Activated CD4-positive, alpha-beta T cell treated with anti-CD3 and anti-CD28 coated beads, Interleukin-2, amount 10 ng/mL, durations not matched to agents 24 days and 14 days (primary cell): ENCODE measurements at regions of chr1 and their contacts with region 1.

Region 1: DNA sequence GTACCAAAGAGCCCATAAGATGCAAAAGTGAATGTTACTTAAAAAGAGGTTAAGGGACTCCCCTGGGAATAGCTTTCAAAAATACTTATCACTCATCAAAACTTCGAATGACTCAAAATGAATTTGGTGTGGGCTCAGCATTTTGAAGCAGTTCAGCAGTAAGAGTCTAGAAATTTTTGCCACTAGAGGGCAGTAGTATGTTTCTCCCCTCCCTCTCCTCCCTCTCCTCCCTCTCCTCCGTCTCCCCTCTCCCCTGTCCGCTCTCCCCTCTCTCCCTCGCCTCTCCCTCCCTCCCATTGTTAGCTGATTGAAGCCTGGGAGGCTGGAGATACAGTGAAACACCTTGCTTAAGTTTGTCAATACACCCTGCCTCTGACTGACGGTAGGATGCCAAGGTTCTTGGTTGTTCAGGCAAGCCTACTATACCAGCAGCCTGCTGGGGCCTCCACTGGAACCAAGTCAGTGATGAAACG is 70.8 kb upstream of the TENT5C start:
- DNase-seq: peak; percentile 81
- H3K4me3 Mint-ChIP-seq: no peak overlapping the region
- H3K27ac Mint-ChIP-seq: peak overlapping the region; percentile 41
- H3K4me1 Mint-ChIP-seq: peaks cover 13% of the 10 kb centered on the region
- H3K27me3 Mint-ChIP-seq: no peaks in the 10 kb centered on the region

Region 2: DNA sequence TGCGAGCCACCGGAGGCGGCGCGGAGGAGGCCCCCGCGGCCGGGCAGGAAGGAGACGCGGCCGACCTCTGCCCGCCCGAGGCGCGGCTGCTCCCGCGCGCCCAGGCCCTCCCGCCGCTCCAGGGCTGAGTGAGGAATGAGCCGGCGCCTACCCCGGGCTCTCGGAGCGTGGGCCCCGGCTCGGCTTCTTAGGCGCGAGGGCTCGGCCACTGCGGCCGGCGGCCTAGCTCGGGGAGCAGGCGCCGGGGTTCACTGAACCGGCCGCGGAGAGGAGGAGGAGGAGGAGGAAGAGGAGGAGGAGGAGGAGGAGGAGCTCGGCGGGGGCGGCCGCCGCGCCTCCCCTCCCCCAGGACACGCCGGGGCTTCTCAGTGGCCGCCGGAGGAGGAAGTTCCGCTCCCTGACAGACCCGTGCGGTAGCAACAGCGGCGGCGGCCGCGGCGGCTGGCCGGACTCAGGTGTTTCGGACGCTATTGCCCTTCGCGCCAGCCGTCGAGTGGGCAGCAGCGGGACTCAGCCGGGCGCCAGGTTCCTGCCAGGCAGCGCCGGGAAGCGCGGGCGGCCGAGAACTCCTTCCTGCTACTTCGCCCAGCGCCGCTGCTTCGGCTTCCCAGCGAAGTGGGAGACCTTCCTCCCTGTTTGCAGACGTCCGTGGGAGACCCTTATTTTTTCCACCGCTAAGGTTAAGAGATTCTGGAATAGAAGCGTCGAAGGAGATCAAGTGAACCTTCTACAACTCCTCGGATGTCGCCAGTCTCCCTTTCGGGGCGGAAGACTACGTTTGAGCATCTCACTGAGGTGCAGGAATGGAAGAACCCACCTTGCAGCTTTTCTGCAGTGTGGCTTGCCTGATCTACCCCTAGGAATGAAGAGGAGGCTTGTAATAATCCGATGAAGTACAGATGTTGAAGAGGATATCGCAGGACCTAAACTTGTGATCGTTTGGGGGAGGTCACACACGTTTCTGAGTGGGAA is 167.7 kb before region 1 on chr1 and contains the start of gene MAN1A2:
- intact Hi-C with region 1: loop called (anchors 5 kb)
- DNase-seq: peak; percentile 95
- H3K4me3 Mint-ChIP-seq: peak within 1 kb of the TSS; percentile 93
- H3K27ac Mint-ChIP-seq: peak within 1 kb of the TSS; percentile 93
- H3K4me1 Mint-ChIP-seq: peaks cover 41% of the 10 kb centered on the region
- H3K27me3 Mint-ChIP-seq: no peaks in the 10 kb centered on the region
- total RNA-seq, gene MAN1A2: 23.9 and 28.7 TPM in 2 replicates

Region 3: GRCh38 chr1:117466761-117467160 is 68.3 kb before region 1 on chr1:
- intact Hi-C with region 1: no loop called
- DNase-seq: no peak
- H3K4me3 Mint-ChIP-seq: no peak overlapping the region
- H3K27ac Mint-ChIP-seq: no peak overlapping the region
- H3K4me1 Mint-ChIP-seq: no peaks in the 10 kb centered on the region
- H3K27me3 Mint-ChIP-seq: no peaks in the 10 kb centered on the region

Region 4: GRCh38 chr1:117512743-117513321 is 22.2 kb before region 1 on chr1:
- intact Hi-C with region 1: loop called (anchors 2 kb)
- DNase-seq: no peak
- H3K4me3 Mint-ChIP-seq: no peak overlapping the region
- H3K27ac Mint-ChIP-seq: no peak overlapping the region
- H3K4me1 Mint-ChIP-seq: peaks cover 2% of the 10 kb centered on the region
- H3K27me3 Mint-ChIP-seq: no peaks in the 10 kb centered on the region

Region 5: GRCh38 chr1:117654493-117655219 is 119.6 kb after region 1 on chr1:
- intact Hi-C with region 1: loop called (anchors 1 kb)
- DNase-seq: peak; percentile 75
- H3K4me3 Mint-ChIP-seq: peak overlapping the region; percentile 72
- H3K27ac Mint-ChIP-seq: peak overlapping the region; percentile 77
- H3K4me1 Mint-ChIP-seq: peaks cover 80% of the 10 kb centered on the region
- H3K27me3 Mint-ChIP-seq: peaks cover 12% of the 10 kb centered on the region

Region 6: DNA sequence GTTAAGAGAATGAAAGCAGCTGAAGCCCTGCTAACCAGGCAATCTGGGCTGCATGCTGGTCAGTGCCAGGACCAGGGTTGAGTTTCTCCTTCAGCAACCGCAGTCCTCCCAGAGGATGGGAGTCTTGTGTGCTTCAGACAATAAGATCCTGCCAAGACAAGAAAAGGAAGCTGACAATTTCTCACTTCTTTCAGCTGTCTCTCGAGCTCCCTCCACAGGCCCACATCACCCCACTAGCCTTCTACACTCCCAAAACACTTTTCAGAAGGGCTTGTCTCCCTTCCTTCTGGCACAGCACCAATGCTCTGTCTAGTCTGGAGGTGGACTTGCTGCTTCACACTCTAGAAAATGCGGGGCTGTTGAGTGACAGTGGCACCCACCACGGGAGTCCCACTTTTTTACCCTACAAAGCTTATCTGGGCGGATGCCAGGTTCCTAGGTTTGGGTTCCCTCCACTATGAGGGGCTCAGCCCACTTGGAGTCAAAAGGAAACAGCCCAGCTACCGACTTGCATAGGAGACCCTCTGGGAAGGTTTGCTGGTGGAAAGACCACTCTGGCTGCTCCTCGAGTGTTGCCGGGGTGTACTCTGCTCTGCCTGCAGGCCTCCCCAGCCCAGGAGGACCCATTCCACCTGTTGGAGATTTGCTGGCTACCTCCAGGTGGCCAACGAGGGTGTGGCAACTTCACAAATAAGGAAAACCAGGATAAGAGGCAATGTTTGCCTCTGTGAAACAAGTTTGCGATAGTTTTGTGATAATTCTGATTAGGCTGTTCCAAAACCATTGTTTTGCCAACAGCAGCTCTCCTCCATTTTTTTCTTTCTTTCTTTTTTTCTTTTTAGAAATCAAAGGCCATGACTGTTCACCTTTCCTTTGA is 139.7 kb after region 1 on chr1:
- intact Hi-C with region 1: loop called (anchors 1 kb)
- DNase-seq: peak; percentile 85
- H3K4me3 Mint-ChIP-seq: no peak overlapping the region
- H3K27ac Mint-ChIP-seq: no peak overlapping the region
- H3K4me1 Mint-ChIP-seq: peaks cover 21% of the 10 kb centered on the region
- H3K27me3 Mint-ChIP-seq: peaks cover 22% of the 10 kb centered on the region

Region 7: DNA sequence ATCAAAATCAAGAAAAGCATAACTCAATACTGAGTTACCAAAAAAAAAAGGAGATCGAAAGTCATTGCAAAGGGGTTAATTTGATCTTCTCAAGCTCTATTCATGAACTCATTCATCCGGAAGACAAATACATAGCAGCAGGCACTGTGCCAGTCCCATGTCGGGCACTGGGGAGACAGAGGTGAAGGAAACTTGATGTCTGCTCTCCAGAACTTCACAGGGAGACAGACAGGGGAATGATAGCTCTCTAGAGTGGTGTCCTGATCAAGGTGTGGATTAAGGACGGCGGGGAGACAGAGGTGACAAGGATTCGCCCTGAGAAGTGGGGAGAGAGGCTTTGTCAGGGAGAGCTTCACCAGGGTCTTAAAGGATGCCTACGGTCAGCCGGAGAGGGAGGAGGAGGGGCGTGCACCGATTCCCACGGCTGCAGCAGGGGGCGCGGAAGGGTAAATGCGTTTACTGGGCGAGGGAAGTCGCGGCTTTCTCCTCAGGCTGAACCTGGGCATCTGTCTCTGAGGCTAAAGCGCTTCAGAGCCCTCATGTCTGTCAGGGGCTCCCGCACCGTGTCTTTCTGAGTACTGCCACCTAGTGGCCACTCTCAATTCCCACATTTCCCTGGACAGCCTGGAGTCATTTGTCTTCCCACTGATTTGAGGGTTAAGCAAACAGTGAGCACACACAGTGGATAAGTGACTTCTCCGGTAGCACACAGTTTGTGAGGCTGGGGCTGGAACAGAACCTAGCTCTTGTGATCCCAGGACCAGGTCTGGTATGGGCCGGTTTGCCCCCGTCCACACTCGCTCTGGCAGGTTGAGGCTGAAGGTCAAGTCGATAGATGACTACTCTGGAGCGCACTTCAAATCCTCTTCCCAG is 223.6 kb after region 1 on chr1:
- intact Hi-C with region 1: loop called (anchors 1 kb)
- DNase-seq: peak; percentile 90
- H3K4me3 Mint-ChIP-seq: peak overlapping the region; percentile 84
- H3K27ac Mint-ChIP-seq: no peak overlapping the region
- H3K4me1 Mint-ChIP-seq: peaks cover 8% of the 10 kb centered on the region
- H3K27me3 Mint-ChIP-seq: peaks cover 39% of the 10 kb centered on the region

Region 8: DNA sequence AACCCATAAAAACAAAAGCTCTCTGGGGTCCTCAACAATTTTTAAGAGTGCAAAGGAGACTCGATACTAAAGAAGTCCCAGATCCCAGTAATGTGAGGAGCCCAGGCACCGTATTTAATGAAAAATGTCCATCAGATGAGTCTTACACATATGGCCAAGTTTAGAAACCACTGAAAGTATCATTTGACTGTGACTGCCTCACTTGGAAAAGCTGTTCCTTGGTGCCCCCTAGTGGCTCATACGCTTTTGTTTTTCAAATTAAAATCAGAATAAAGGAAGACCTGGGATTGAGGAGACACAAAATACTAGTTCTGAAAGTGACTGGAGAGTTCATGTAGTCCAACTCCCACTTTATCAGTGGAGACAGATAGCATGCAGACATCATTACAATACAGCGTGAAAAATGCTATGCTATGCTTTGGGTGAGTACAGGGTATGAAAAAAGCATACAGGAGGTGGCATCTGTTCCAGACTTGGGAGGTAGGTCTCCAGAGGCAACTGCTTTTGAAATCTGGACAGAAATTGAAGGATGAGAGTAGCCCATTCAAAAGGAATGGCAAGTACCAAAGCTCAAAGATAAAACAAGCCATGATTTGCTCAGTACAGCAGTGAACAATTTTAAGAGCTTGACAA is 360.6 kb after region 1 on chr1:
- intact Hi-C with region 1: loop called (anchors 1 kb)
- DNase-seq: peak; percentile 88
- H3K4me3 Mint-ChIP-seq: no peak overlapping the region
- H3K27ac Mint-ChIP-seq: no peak overlapping the region
- H3K4me1 Mint-ChIP-seq: no peaks in the 10 kb centered on the region
- H3K27me3 Mint-ChIP-seq: no peaks in the 10 kb centered on the region